Caco-2 (cell line): ENCODE measurements at regions of chr7 and their contacts with region 1.

Region 1: GRCh38 chr7:17130281-17131059 is 168.0 kb upstream of the AHR start:
- DNase-seq: peak; percentile 81 to 83
- H3K4me3 ChIP-seq: no peak overlapping the region
- H3K4me3 Mint-ChIP-seq: peak overlapping the region; percentile 54
- H3K27ac Mint-ChIP-seq: peak overlapping the region; percentile 80
- H3K4me1 ChIP-seq: peaks cover 35% of the 10 kb centered on the region
- H3K4me1 Mint-ChIP-seq: peaks cover 38% of the 10 kb centered on the region
- H3K27me3 ChIP-seq: no peaks in the 10 kb centered on the region
- H3K27me3 Mint-ChIP-seq: no peaks in the 10 kb centered on the region
- CTCF ChIP-seq: no peak

Region 2: DNA sequence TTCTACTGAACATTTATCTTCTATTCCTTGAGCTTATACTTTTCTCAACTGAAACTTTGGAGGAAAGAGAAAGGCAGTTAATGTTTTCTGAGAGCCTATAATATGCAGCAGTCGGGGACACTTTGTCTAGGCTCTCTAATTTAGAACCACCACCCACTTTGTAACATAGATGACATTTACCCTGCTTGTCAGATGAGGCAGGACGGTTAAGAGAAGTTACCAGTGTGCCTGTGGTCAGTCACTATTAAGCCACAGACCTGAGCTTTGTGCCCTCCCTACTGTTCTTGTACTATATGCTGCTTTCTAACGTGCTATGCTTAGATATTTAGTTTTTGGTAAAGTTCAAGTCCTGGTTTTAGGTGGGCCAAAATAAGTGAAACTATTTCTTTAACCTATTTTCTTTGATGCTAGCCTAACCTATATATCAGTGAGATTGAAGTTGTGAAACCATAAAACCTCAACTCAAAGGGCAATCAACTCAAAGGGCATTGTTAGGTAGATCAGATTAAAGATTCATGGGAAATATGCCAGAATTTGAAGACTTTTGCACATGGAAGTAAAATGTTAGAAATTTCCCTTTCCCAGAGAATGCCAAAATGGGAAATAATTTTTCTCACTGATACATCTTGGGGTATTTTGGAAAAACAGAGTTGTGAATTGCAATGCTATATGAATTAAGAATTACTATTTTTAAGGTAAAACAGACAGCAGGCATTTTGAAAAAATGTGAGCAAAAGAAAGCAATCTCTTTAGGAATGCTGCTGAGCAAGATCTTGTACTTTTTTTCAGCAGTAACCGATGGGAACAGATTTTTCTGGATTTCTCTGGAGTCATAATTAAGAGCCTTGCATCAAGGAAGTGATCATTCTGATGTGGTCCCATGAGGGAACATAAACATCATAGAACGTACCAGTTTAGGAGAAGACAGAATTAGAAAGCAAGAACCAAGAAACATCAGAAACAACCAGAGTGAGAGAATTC is 92.0 kb before region 1 on chr7:
- CTCF ChIA-PET with region 1: no interaction called
- POLR2A ChIA-PET with region 1: no interaction called
- intact Hi-C with region 1: loop called (anchors 1 kb)
- DNase-seq: no peak
- H3K4me3 ChIP-seq: no peak overlapping the region
- H3K4me3 Mint-ChIP-seq: peak overlapping the region; percentile 25
- H3K27ac Mint-ChIP-seq: peak overlapping the region; percentile 39
- H3K4me1 ChIP-seq: peaks cover 20% of the 10 kb centered on the region
- H3K4me1 Mint-ChIP-seq: peaks cover 27% of the 10 kb centered on the region
- H3K27me3 ChIP-seq: no peaks in the 10 kb centered on the region
- H3K27me3 Mint-ChIP-seq: no peaks in the 10 kb centered on the region
- CTCF ChIP-seq: no peak

Region 3: GRCh38 chr7:17071866-17072265 is 58.6 kb before region 1 on chr7:
- CTCF ChIA-PET with region 1: no interaction called
- POLR2A ChIA-PET with region 1: no interaction called
- intact Hi-C with region 1: no loop called
- DNase-seq: no peak
- H3K4me3 ChIP-seq: no peak overlapping the region
- H3K4me3 Mint-ChIP-seq: no peak overlapping the region
- H3K27ac Mint-ChIP-seq: no peak overlapping the region
- H3K4me1 ChIP-seq: no peaks in the 10 kb centered on the region
- H3K4me1 Mint-ChIP-seq: peaks cover 7% of the 10 kb centered on the region
- H3K27me3 ChIP-seq: no peaks in the 10 kb centered on the region
- H3K27me3 Mint-ChIP-seq: no peaks in the 10 kb centered on the region
- CTCF ChIP-seq: no peak

Region 4: GRCh38 chr7:17152721-17153120 is 22.3 kb after region 1 on chr7:
- CTCF ChIA-PET with region 1: no interaction called
- POLR2A ChIA-PET with region 1: no interaction called
- intact Hi-C with region 1: no loop called
- DNase-seq: no peak
- H3K4me3 ChIP-seq: no peak overlapping the region
- H3K4me3 Mint-ChIP-seq: no peak overlapping the region
- H3K27ac Mint-ChIP-seq: no peak overlapping the region
- H3K4me1 ChIP-seq: no peaks in the 10 kb centered on the region
- H3K4me1 Mint-ChIP-seq: no peaks in the 10 kb centered on the region
- H3K27me3 ChIP-seq: no peaks in the 10 kb centered on the region
- H3K27me3 Mint-ChIP-seq: no peaks in the 10 kb centered on the region
- CTCF ChIP-seq: no peak

Region 5: DNA sequence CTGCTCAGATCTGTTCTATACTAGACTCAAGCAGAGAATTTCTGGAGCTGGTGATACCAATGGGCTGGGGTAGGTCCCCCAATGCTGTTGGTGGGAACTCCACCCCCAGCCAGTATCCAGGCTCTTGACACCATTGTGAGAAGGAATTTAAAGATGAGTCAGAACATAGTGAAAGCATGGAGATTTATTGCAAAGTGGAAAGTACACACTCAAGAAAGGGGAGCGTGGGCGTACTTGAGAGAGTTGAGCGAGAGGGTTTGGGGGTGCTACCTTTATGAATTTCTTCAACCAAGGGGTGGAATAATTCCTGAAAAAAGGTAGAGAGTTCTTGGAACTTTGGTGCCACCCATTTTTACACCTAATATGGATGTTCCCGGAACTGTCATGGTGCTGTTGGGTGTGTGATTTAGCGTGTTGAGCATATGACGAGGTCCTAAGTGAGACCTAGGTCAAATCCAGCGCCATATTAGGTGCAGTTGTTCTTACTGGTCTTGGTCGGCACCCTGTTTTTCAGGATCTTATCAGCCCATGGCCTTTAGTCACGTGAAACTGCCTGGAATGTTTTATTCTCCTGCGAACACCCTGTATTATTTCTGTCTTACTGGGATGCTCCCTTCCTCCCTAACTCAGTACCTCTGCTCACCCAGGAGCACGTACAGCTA is 46.0 kb after region 1 on chr7:
- CTCF ChIA-PET with region 1: no interaction called
- POLR2A ChIA-PET with region 1: no interaction called
- intact Hi-C with region 1: no loop called
- DNase-seq: no peak
- H3K4me3 ChIP-seq: no peak overlapping the region
- H3K4me3 Mint-ChIP-seq: no peak overlapping the region
- H3K27ac Mint-ChIP-seq: no peak overlapping the region
- H3K4me1 ChIP-seq: no peaks in the 10 kb centered on the region
- H3K4me1 Mint-ChIP-seq: no peaks in the 10 kb centered on the region
- H3K27me3 ChIP-seq: no peaks in the 10 kb centered on the region
- H3K27me3 Mint-ChIP-seq: no peaks in the 10 kb centered on the region
- CTCF ChIP-seq: no peak

Region 6: GRCh38 chr7:17205910-17206905 is 75.7 kb after region 1 on chr7:
- CTCF ChIA-PET with region 1: no interaction called
- POLR2A ChIA-PET with region 1: no interaction called
- intact Hi-C with region 1: loop called (anchors 1 kb)
- DNase-seq: peak; percentile 75 to 90
- H3K4me3 ChIP-seq: no peak overlapping the region
- H3K4me3 Mint-ChIP-seq: no peak overlapping the region
- H3K27ac Mint-ChIP-seq: peak overlapping the region; percentile 34
- H3K4me1 ChIP-seq: peaks cover 28% of the 10 kb centered on the region
- H3K4me1 Mint-ChIP-seq: peaks cover 16% of the 10 kb centered on the region
- H3K27me3 ChIP-seq: no peaks in the 10 kb centered on the region
- H3K27me3 Mint-ChIP-seq: no peaks in the 10 kb centered on the region
- CTCF ChIP-seq: no peak

Region 7: GRCh38 chr7:17239683-17240521 is 109.4 kb after region 1 on chr7:
- CTCF ChIA-PET with region 1: no interaction called
- POLR2A ChIA-PET with region 1: no interaction called
- intact Hi-C with region 1: loop called (anchors 2 kb)
- DNase-seq: peak; percentile 39 to 72
- H3K4me3 ChIP-seq: no peak overlapping the region
- H3K4me3 Mint-ChIP-seq: no peak overlapping the region
- H3K27ac Mint-ChIP-seq: peak overlapping the region; percentile 14
- H3K4me1 ChIP-seq: peaks cover 45% of the 10 kb centered on the region
- H3K4me1 Mint-ChIP-seq: peaks cover 38% of the 10 kb centered on the region
- H3K27me3 ChIP-seq: no peaks in the 10 kb centered on the region
- H3K27me3 Mint-ChIP-seq: no peaks in the 10 kb centered on the region
- CTCF ChIP-seq: no peak

Region 8: DNA sequence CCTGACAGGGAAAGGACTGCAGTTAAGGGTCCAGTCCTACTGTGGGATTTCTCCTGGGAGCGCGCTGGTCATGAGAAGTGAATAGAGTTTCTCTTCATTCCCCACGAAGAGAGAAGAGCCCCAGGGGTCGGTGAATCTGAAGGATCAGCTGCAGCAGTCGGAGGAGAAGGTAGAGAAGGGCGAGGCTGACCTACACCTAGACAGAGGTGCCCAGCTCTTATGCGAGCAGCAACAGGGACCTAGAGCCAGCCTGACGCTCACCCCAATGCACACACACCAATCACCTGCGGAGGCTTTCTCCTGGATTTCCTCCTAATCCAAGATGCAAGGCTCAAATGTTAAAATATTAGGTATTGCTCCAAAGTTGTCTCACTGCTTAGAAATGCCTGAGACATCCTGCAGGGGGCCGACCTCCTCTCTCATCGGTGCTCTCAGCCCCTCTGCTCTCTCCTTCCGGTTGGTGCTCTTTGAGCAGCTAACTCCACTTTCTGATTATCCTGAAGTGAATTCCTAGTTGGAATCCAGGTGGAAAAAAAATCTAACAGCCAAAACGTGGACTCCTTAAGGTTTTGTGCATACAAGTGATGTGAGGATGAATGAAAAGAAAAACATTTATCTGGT is 344.4 kb after region 1 on chr7:
- CTCF ChIA-PET with region 1: no interaction called
- POLR2A ChIA-PET with region 1: no interaction called
- intact Hi-C with region 1: no loop called
- DNase-seq: peak in 1 of 2 experiments; percentile 28
- H3K4me3 ChIP-seq: no peak overlapping the region
- H3K4me3 Mint-ChIP-seq: no peak overlapping the region
- H3K27ac Mint-ChIP-seq: no peak overlapping the region
- H3K4me1 ChIP-seq: no peaks in the 10 kb centered on the region
- H3K4me1 Mint-ChIP-seq: no peaks in the 10 kb centered on the region
- H3K27me3 ChIP-seq: no peaks in the 10 kb centered on the region
- H3K27me3 Mint-ChIP-seq: no peaks in the 10 kb centered on the region
- CTCF ChIP-seq: peak; percentile 31 to 32